ENCODE measurements at regions of chr14 and their contacts with region 1.

Region 1: DNA sequence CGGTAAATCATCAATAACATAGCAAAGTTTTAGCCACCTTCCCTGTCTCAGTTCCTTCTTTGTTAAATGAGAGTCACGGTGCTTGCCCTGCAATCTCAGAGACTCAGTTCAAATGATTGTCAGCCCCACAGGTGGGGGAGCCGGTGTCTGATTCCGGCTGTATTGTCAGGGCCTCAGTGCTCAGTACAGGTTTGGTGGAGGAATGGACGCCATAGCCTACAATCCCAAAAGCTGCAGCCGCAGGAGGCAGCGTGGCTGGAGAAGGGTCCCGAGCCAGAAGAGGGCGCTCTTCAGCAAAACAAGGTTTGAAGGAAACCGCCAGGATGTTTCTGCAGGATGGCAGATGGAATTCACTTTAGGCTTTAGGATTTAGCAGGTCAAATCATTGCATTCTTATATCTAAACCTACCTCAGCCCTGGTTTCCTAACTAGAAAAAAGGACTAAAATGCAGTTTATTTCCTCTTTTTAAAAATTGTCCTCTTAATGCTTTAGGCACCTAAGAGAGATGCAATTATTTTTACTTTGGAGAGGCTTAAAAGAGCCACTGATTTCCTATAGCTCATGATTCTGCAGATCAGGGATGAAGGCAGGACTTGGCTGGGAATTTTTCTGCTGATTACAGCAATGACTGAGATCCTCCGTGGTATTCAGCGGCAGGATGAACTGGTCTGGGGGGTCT is 29.2 kb downstream of the FOS start:
- DNase-seq: peak; percentile 77 to 97
- H3K4me3 ChIP-seq: no peak overlapping the region
- H3K27ac ChIP-seq: no peak overlapping the region
- H3K4me1 ChIP-seq: peaks cover 15% of the 10 kb centered on the region
- H3K27me3 ChIP-seq: no peaks in the 10 kb centered on the region
- CTCF ChIP-seq: peak; percentile 99

Region 2: GRCh38 chr14:74860906-74861733 is 446.7 kb before region 1 on chr14:
- CTCF ChIA-PET with region 1: interaction called, 8 read pairs
- POLR2A ChIA-PET with region 1: no interaction called
- intact Hi-C with region 1: loop called (anchors 1 kb)
- DNase-seq: peak; percentile 73 to 96
- H3K4me3 ChIP-seq: no peak overlapping the region
- H3K27ac ChIP-seq: no peak overlapping the region
- H3K4me1 ChIP-seq: peaks cover 5% of the 10 kb centered on the region; the same call in 1 of the 2 replicates
- H3K27me3 ChIP-seq: no peaks in the 10 kb centered on the region
- CTCF ChIP-seq: peak; percentile 99

Region 3: DNA sequence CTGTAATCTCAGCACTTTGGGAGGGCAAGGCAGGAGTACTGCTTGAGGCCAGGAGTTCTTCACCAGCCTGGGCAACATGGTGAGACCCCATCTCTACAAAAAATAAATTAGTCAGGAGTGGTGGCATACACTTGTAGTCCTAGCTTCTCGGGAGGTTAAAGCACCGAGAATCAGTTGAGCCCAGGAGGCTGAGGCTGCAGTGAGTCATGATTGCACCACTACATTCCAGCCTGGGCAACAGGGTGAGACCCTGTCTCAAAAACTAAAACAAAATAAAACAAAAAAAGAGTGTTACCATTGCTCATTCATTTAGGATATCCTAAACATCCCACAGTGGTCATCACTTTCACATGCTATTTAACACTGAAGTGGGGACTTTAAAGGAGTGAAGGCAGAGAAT is 188.8 kb before region 1 on chr14:
- CTCF ChIA-PET with region 1: no interaction called
- POLR2A ChIA-PET with region 1: no interaction called
- intact Hi-C with region 1: no loop called
- DNase-seq: no peak
- H3K4me3 ChIP-seq: no peak overlapping the region
- H3K27ac ChIP-seq: no peak overlapping the region
- H3K4me1 ChIP-seq: peaks cover 23% of the 10 kb centered on the region
- H3K27me3 ChIP-seq: no peaks in the 10 kb centered on the region
- CTCF ChIP-seq: no peak

Region 4: GRCh38 chr14:75132382-75133086 is 175.3 kb before region 1 on chr14:
- CTCF ChIA-PET with region 1: interaction called, 8 read pairs
- POLR2A ChIA-PET with region 1: no interaction called
- intact Hi-C with region 1: loop called (anchors 1 kb)
- DNase-seq: peak; percentile 79 to 87
- H3K4me3 ChIP-seq: no peak overlapping the region
- H3K27ac ChIP-seq: peak overlapping the region; percentile 33
- H3K4me1 ChIP-seq: peaks cover 29% of the 10 kb centered on the region
- H3K27me3 ChIP-seq: no peaks in the 10 kb centered on the region
- CTCF ChIP-seq: peak; percentile 96

Region 5: DNA sequence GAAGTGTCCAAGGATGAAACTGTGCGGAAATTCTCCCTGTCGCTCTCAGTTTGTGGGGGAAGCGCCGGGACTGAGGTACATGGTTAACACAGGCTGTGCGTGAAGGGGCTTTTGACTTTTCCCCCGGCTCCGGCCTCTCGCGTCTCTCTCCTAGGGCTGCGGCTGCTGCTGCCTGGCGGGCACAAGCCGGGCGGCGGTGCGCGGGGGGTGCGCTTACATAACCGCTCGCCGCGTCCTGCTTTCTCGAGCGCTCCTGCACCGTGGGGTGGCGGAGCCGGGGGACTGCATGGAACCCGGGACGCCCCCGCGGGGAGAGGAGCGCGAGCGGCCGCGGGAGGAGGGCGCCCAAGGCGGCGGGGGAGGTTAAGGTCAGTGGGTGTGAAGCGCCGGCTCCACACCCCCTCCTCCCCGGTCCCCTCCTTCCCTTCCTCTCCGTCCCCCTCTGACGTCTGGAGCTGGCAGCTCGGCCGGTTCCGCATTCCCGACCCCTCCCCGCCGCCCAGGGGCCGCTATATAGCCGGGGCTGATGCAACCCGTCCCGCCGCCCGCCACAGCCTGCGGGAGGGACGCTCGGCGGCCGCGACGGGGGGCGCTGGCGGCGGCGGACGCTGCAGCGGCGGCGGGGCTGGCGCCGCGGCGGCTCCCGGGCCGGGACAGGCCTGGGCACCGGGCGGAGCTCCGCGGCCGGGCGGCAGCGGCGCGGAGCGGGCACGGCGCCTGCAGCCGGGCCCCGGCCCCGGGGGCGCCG is 119.8 kb after region 1 on chr14 and contains the start of gene JDP2:
- CTCF ChIA-PET with region 1: interaction called, 6 read pairs
- POLR2A ChIA-PET with region 1: interaction called, 3 read pairs
- intact Hi-C with region 1: loop called (anchors 1 kb)
- DNase-seq: peak; percentile 78 to 99
- H3K4me3 ChIP-seq: peak within 1 kb of the TSS; percentile 90
- H3K27ac ChIP-seq: no peak within 1 kb of the TSS
- H3K4me1 ChIP-seq: peaks cover 52% of the 10 kb centered on the region
- H3K27me3 ChIP-seq: no peaks in the 10 kb centered on the region
- CTCF ChIP-seq: no peak
- total RNA-seq, gene JDP2: 186 and 300 TPM in 2 replicates

Region 6: GRCh38 chr14:75487155-75487671 is 179.4 kb after region 1 on chr14:
- CTCF ChIA-PET with region 1: interaction called, 28 read pairs
- POLR2A ChIA-PET with region 1: no interaction called
- intact Hi-C with region 1: loop called (anchors 1 kb)
- DNase-seq: peak; percentile 83 to 99
- H3K4me3 ChIP-seq: no peak overlapping the region
- H3K27ac ChIP-seq: 0 out of 2 replicates have a peak overlapping the region, but pooled peaks have one; percentile 5
- H3K4me1 ChIP-seq: peaks cover 18% of the 10 kb centered on the region
- H3K27me3 ChIP-seq: no peaks in the 10 kb centered on the region
- CTCF ChIP-seq: no peak

Region 7: DNA sequence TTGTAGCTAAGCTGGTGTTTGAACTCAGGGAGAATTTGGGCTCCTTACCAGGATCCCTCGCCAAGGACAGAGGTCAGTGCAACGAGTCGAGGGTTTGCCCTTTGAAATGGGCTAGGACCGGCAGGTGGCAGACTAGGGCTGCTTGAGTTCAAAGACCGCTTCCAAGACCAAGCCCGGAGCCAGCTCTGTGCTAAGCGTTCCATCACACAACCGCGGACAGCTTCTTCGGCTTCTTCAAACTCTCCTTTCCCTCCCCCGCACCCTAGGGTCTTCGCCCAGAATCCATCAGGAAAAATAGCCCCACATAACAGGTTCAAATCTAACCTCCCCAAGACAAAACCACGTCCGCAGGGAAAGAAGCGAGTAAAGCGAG is 269.9 kb after region 1 on chr14:
- CTCF ChIA-PET with region 1: no interaction called
- POLR2A ChIA-PET with region 1: interaction called, 5 read pairs
- intact Hi-C with region 1: loop called (anchors 1 kb)
- DNase-seq: peak; percentile 83 to 93
- H3K4me3 ChIP-seq: peak overlapping the region; percentile 67
- H3K27ac ChIP-seq: peak overlapping the region; percentile 24
- H3K4me1 ChIP-seq: peaks cover 32% of the 10 kb centered on the region
- H3K27me3 ChIP-seq: no peaks in the 10 kb centered on the region
- CTCF ChIP-seq: peak; percentile 97

Region 8: DNA sequence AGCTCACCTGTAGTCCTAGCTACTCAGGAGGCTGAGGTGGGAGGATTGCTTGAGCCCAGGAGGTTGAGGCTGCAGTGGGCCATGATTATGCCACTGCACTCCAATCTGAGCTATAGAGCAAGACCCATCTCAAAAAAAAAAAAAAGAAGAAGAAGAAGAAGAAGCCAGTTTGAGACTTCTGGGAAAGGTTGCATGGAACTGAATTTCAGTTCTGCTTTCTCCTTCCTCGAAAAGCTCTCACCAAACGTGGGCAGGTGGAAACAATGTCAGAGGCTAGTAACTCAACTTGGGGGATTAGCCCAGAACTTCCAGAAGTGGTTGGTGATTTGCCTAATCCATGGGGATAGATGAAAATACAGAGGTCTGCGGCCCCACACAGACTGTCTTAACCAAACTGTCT is 289.3 kb after region 1 on chr14:
- CTCF ChIA-PET with region 1: no interaction called
- POLR2A ChIA-PET with region 1: no interaction called
- intact Hi-C with region 1: no loop called
- DNase-seq: no peak
- H3K4me3 ChIP-seq: no peak overlapping the region
- H3K27ac ChIP-seq: no peak overlapping the region
- H3K4me1 ChIP-seq: no peaks in the 10 kb centered on the region
- H3K27me3 ChIP-seq: no peaks in the 10 kb centered on the region
- CTCF ChIP-seq: no peak

Region 9: DNA sequence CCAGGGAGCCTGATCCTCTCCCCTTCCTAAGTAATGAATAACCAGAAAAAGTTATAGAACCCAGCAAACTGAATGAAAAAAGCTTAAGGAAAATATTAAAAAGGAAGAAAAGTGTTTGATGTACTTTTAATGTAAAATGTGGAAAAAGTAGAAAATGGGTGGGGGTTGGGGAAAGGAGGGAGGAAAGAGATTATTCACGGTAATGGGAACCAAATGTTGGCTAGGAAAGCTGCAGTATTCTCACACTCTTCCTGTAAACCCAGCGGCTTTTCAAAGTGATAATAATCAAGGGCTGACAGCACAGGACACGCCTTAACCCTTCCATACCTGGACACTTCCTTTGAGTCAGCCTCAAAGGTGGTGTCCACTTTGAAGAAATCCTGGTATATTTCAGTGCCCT is 534.7 kb after region 1 on chr14:
- CTCF ChIA-PET with region 1: interaction called, 11 read pairs
- POLR2A ChIA-PET with region 1: no interaction called
- intact Hi-C with region 1: no loop called
- DNase-seq: no peak
- H3K4me3 ChIP-seq: no peak overlapping the region
- H3K27ac ChIP-seq: no peak overlapping the region
- H3K4me1 ChIP-seq: peaks cover 14% of the 10 kb centered on the region
- H3K27me3 ChIP-seq: no peaks in the 10 kb centered on the region
- CTCF ChIP-seq: no peak